ENCODE measurements at regions of chr2 and their contacts with region 1.

Region 1: DNA sequence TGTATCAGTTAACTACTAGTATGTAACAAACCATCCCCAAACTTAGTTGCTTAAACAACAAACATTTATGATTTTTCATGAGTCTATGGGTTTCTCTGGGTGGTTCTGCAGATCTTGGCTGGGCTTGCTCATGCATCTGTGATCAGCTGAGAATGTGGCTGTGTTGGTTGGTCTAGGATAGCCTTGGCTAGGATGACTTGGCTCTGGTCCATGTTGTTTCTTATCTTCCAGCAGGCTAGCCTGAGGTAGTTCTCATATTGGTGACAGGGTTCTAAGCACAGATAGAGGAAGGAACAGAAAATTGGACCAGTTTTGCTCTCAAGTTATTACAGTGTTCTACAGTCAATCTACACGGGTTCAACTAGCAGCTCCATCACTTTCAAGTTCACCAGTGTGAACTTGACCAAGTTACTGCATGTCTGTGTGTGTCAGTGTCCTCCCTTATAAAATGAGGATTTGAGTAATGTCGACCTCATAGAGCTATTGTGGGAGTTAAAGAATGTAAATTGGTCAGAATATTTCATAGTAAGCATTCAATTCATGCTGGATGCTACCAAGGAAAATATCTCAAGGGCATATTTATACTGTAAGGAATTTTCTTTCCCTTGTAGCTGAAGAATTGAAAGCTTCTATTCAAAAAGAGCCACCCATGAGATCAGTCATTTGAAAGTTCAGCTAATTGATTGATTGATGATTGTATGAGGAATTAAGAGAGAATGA is 65.3 kb downstream of the MYO3B start:
- DNase-seq: no peak

Region 2: GRCh38 chr2:170324640-170325046 is 81.4 kb after region 1 on chr2:
- in situ Hi-C with region 1: loop called (anchors 5 kb)
- DNase-seq: peak; percentile 54

Region 3: DNA sequence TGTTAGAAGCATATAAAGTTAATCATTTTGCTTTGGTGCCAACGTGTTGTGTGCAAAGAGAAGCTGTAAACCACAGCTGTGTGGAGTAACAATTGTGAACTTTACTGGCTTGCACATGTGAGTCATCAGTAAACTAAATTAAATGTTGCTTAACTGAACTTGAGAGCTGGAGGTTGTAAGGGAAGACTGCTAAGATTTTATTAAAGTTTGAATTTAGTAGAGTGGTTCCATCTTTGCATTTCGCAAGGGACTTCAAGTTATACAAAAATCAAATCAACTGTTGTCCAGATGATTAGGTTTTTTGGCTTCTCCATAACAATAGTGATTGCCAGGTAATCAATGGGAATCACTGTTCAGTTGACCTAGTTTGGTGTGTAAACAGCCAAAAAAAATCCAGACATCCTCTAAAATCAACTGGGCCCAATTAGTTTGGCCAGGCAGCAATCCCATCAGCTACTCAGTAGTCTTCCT is 182.0 kb after region 1 on chr2:
- in situ Hi-C with region 1: no loop called
- DNase-seq: no peak

Measured in G401 (cell line).